Activated CD8-positive, alpha-beta memory T cell treated with anti-CD3 and anti-CD28 coated beads, Interleukin-2, amount 10 ng/mL, durations not matched to agents 7 days and 5 days (primary cell): ENCODE measurements at regions of chr12 and their contacts with region 1.

Region 1: DNA sequence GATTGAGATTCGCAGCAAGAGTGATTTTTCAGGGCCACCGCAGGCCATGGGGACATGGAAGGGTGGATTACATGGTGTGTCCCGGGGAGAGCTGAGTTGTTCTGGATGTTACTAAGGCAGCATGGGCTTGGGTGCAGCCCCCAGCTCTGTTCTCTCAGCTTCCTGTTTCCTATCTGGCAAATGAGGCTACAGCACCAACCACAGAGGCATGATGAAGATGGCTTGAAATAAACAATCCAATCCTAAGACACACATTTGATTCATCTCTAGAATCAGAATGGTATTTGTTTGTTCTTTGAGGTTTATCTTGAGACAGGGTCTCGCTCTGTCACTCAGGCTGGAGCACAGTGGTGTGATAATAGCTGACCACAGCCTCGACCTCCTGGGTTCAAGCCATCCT is 21.6 kb downstream of the GLTP start:
- DNase-seq: no peak
- ATAC-seq: peak; percentile 64
- H3K4me3 Mint-ChIP-seq: no peak overlapping the region
- H3K27ac Mint-ChIP-seq: peak overlapping the region; percentile 56
- H3K4me1 Mint-ChIP-seq: peaks cover 17% of the 10 kb centered on the region
- H3K27me3 Mint-ChIP-seq: no peaks in the 10 kb centered on the region

Region 2: GRCh38 chr12:109880016-109880931 is 21.5 kb after region 1 on chr12 and contains the start of gene GLTP:
- CTCF ChIA-PET with region 1: interaction called, 29 read pairs
- DNase-seq: peak; percentile 89
- ATAC-seq: peak; percentile 97
- H3K4me3 Mint-ChIP-seq: peak within 1 kb of the TSS; percentile 94
- H3K27ac Mint-ChIP-seq: peak within 1 kb of the TSS; percentile 87
- H3K4me1 Mint-ChIP-seq: peaks cover 43% of the 10 kb centered on the region
- H3K27me3 Mint-ChIP-seq: no peaks in the 10 kb centered on the region
- total RNA-seq, gene GLTP: 16.3 to 19.2 TPM

Region 3: GRCh38 chr12:109899783-109900751 is 41.3 kb after region 1 on chr12 and contains the start of gene TCHP:
- CTCF ChIA-PET with region 1: interaction called, 16 read pairs
- DNase-seq: peak; percentile 84
- ATAC-seq: peak; percentile 92
- H3K4me3 Mint-ChIP-seq: peak within 1 kb of the TSS; percentile 80
- H3K27ac Mint-ChIP-seq: peak within 1 kb of the TSS; percentile 95
- H3K4me1 Mint-ChIP-seq: peaks cover 27% of the 10 kb centered on the region
- H3K27me3 Mint-ChIP-seq: no peaks in the 10 kb centered on the region
- total RNA-seq, gene TCHP: 38.4 to 40.1 TPM

Region 4: DNA sequence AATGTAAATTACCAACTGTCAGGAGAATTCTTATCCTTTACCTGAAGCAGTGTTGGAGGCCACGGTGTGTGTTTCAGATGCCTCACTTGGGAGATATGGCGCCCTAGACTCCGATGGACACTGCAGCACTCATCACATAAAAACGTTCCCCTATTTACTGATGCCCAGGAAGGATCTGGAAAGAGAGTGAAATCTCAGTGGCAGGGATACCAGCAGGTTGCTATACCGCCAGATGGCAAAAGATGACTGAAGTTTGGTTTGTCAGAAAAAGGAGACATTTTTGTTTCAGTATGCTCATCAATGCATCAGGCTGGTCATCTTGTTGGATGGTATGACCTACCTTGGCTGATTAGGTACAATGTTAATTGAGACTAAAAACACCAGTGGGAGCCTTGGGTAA is 132.8 kb after region 1 on chr12:
- CTCF ChIA-PET with region 1: no interaction called
- DNase-seq: no peak
- ATAC-seq: no peak
- H3K4me3 Mint-ChIP-seq: no peak overlapping the region
- H3K27ac Mint-ChIP-seq: no peak overlapping the region
- H3K4me1 Mint-ChIP-seq: peaks cover 54% of the 10 kb centered on the region
- H3K27me3 Mint-ChIP-seq: no peaks in the 10 kb centered on the region

Region 5: DNA sequence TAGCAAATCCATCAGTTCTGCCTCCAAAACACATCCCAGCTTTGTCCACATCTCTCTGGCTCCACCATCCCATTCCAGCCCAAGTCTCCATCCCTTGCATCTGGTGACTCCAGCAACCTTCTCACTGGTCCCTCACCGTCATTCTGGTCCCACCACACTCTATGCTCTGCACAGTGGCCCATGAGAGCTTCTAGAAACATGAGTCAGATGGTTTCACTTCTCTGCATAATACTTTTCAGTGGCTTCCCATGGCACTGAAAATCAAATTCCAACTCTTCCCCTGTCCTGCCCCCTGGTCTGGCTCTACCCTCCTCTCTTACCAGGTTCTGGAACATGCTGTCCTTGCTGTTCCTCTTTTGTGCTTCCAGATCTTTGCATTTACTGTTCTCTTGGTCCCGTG is 206.8 kb after region 1 on chr12:
- CTCF ChIA-PET with region 1: no interaction called
- DNase-seq: no peak
- ATAC-seq: peak; percentile 27
- H3K4me3 Mint-ChIP-seq: no peak overlapping the region
- H3K27ac Mint-ChIP-seq: no peak overlapping the region
- H3K4me1 Mint-ChIP-seq: peaks cover 14% of the 10 kb centered on the region
- H3K27me3 Mint-ChIP-seq: no peaks in the 10 kb centered on the region